Cardiac septum (tissue), 1 donor: ENCODE measurements at regions of chr1 and their contacts with region 1.

Region 1: DNA sequence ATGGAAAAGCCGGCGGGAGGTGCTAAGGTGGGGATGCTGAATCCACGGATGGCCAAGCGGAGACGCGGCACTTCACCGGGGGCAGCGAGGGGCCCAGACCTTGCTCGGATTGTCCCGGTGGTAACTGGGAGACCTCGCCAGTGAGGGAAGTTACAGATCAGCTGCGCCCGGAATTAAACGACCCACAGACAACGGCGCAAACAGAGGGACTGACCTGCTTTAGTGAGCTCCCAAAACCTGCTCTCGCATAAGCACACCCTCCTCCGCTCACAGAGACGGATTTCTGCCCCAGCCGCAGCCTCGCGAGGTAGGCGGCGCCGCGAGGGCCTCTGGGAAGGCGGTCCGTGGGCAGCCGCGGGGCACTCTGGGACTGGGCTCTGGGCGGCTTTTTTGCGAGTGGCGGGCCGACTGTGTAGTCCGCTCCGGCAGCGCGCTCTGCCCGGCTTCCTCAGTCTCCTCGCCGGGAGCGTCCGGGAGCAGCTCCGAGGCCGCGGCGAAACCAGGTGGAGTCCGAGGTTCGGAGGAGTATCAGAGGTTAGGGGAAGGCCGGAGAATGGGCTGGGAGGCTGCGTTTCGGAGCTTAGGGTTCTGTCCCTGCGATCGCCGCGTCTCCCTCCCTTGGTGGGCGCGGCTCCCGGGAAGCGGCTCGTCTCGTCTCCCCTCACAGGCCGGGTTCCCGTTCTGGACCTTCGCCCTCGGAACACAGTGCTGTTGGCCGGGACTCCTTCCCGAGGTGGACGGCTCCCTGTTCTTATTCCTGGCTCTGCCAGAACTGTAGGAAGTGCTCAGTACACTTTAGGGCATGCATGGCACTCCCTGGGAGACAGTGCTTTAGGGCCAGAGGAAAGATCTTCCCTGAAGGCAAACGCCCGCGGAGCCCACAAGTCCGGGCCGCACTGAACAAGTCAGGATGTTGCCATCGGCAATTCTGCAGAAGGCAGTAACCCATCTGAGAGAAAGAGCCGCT is at the start of gene EXO5:
- DNase-seq: peak; percentile 95
- total RNA-seq, gene EXO5: 4.7 TPM

Region 2: DNA sequence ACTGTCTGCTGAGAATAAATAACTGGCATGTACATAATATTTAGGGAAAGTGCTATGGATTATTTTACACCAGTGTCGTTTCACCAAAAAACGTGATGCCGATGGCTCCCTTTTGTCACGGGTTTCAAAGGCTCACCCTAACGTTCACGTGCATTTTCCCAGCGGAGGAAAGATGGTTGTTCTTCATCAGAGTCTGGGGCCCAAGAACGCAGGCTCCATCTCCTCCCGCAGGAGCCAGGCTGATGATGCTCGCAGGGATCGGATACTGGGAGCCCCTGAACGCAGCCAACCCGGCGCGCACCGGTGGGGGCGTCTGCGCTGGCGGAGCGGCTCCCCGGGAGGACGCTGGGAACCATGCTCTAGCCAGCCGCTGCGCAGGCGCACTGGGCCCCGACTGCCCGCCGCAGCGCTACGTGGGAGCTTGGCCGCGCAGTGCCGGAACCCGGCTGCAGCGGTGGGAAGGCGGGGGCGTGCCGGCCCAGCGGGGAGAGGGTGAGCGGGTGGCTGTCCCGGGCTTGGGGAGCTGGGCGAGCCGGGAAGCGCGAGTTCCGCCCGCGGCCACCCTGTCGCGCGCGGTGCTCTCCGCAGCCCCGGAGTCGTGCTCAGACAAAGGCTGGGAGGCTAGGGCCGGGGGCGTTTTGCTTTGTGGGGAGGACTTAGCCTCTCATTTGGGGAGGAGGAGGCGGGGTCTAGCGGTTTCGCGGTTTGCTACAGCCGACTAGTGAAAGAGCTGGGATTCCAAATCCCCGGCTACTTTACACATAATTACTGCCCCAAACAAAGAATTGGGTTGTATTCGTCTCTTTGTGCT is 58.8 kb before region 1 on chr1 and contains the start of gene ZFP69B:
- intact Hi-C with region 1: loop called (anchors 5 kb)
- DNase-seq: peak; percentile 96
- total RNA-seq, gene ZFP69B: 1.3 TPM

Region 3: GRCh38 chr1:40531381-40532061 is 22.9 kb after region 1 on chr1 and contains the start of gene ZNF684:
- intact Hi-C with region 1: loop called (anchors 1 kb)
- DNase-seq: peak; percentile 97
- total RNA-seq, gene ZNF684: 11.0 TPM